ENCODE measurements at regions of chr2 and their contacts with region 1.

Region 1: DNA sequence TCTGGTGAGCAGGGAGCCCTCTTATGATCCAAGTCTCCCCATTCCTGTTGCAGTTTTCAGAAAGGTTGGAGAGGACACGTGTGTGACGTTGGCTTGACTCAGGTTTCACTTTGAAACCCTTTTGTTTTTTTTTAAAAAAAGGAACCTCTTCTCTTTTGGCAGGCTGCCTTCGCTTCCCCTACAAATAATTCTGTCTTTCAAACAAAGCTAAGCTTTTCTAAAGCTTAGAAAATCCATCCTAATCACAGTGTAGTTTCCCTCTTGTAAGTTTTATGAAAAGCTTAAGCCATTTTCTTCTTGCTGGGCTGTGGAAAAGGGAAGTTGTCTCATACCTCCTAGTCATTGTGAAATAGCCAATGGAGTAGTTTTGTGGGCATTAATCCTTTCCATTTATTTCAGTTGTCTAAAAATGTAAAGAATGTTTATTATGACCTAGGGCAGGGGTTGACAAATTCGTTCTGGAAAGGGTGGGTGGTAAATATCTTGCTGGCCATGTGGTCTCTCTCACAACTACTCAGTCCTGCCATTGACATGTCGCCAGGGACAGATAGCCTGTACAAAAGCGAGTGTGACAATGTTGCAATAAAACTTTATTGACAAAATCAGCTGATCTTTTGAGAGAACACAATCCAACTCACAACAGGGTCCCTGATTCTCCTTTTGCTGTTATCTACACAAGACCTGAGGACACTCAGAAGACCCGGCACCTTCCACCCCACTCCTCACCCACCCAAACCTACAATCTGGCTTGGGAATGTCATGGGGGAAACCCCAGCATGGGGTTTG is 878.8 kb downstream of the RNF144A start:
- DNase-seq: no peak
- H3K4me3 ChIP-seq: no peak overlapping the region
- H3K27ac ChIP-seq: no peak overlapping the region
- H3K4me1 ChIP-seq: no peaks in the 10 kb centered on the region
- CTCF ChIP-seq: no peak

Region 2: DNA sequence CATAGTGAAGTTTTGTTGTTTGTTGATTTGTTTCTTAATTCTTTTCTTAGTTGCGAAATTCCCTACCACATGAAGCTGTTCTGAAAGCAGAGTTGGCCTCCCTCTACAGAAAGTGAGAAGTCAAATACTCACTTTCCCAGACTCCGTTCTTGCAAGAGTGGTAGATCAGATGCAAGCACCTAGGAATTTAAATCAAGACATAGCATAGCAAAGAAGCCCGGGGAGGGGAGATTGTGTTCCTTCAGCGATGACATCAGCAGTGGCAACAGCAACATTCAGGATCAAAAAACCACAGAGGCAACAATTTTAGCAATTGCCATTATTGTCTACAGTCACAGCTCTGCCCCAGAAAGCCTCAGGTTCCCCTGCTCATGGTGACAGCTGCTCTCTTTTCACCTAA is 298.8 kb before region 1 on chr2:
- CTCF ChIA-PET with region 1: no interaction called
- POLR2A ChIA-PET with region 1: no interaction called
- intact Hi-C with region 1: no loop called
- DNase-seq: no peak
- H3K4me3 ChIP-seq: no peak overlapping the region
- H3K27ac ChIP-seq: no peak overlapping the region
- H3K4me1 ChIP-seq: no peaks in the 10 kb centered on the region
- CTCF ChIP-seq: no peak

Region 3: GRCh38 chr2:7785700-7786099 is 10.3 kb before region 1 on chr2:
- CTCF ChIA-PET with region 1: no interaction called
- POLR2A ChIA-PET with region 1: interaction called, 15 read pairs
- intact Hi-C with region 1: no loop called
- DNase-seq: no peak
- H3K4me3 ChIP-seq: no peak overlapping the region
- H3K27ac ChIP-seq: no peak overlapping the region
- H3K4me1 ChIP-seq: no peaks in the 10 kb centered on the region
- CTCF ChIP-seq: no peak